HepG2 (cell line): ENCODE measurements at regions of chr7 and their contacts with region 1.

Region 1: DNA sequence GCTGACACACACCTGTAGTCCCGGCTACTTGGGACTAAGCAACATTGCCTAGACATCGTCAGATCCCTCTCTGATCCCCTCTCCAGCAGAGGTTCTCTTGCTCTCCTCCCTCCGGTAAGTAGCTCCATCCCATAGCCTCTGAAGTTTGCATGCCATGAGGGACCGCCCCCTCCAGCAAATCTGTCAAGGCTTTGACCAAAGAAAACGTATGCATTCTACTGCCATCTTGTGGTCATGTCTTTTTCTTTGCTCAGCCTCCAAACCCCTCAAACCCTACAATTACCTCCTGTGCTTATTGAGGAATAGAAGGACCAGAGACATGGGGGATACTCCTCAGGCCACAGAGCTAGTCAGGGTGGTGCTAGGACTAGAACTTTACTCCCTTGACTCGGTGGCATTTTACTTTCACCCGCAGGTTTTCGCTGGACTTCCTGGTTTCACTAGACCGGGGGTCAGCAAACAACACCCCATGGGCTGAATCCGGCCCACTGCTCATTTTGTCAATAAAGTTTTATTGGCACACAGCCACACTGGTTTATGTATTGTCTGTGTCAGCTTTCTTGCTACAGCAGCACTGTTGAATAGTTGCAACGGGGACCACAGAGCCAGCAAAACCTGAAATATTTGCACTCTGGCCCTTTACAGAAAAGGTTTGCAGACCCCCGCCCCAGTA is 202.6 kb upstream of the FOXK1 start:
- DNase-seq: peak; percentile 72
- ATAC-seq: peak; percentile 90
- H3K4me3 ChIP-seq: no peak overlapping the region
- H3K27ac ChIP-seq: no peak overlapping the region
- H3K4me1 ChIP-seq: no peaks in the 10 kb centered on the region
- H3K27me3 ChIP-seq: no peaks in the 10 kb centered on the region
- CTCF ChIP-seq: peak; percentile 77
- EP300 ChIP-seq: no peak
- POLR2A ChIP-seq: no peak
- RAD21 ChIP-seq: 0 out of 2 replicates have a peak, but pooled peaks have one; percentile 32

Region 2: GRCh38 chr7:4226525-4226884 is 253.0 kb before region 1 on chr7:
- CTCF ChIA-PET with region 1: interaction called, 6 read pairs
- POLR2A ChIA-PET with region 1: no interaction called
- in situ Hi-C with region 1: loop called (anchors 10 kb)
- intact Hi-C with region 1: loop called (anchors 10 kb)
- DNase-seq: peak; percentile 8
- ATAC-seq: peak; percentile 66
- H3K4me3 ChIP-seq: no peak overlapping the region
- H3K27ac ChIP-seq: no peak overlapping the region
- H3K4me1 ChIP-seq: no peaks in the 10 kb centered on the region
- H3K27me3 ChIP-seq: no peaks in the 10 kb centered on the region
- CTCF ChIP-seq: peak; percentile 53
- EP300 ChIP-seq: no peak
- POLR2A ChIP-seq: no peak
- RAD21 ChIP-seq: no peak

Region 3: GRCh38 chr7:4235596-4235995 is 243.9 kb before region 1 on chr7:
- CTCF ChIA-PET with region 1: no interaction called
- POLR2A ChIA-PET with region 1: no interaction called
- in situ Hi-C with region 1: no loop called
- intact Hi-C with region 1: loop called (anchors 10 kb)
- DNase-seq: peak; percentile 45
- ATAC-seq: peak; percentile 89
- H3K4me3 ChIP-seq: no peak overlapping the region
- H3K27ac ChIP-seq: no peak overlapping the region
- H3K4me1 ChIP-seq: peaks cover 40% of the 10 kb centered on the region
- H3K27me3 ChIP-seq: no peaks in the 10 kb centered on the region
- CTCF ChIP-seq: no peak
- EP300 ChIP-seq: no peak
- POLR2A ChIP-seq: no peak
- RAD21 ChIP-seq: no peak

Region 4: GRCh38 chr7:4602905-4603842 is 123.7 kb after region 1 on chr7:
- CTCF ChIA-PET with region 1: no interaction called
- POLR2A ChIA-PET with region 1: no interaction called
- in situ Hi-C with region 1: no loop called
- intact Hi-C with region 1: no loop called
- DNase-seq: no peak
- ATAC-seq: no peak
- H3K4me3 ChIP-seq: no peak overlapping the region
- H3K27ac ChIP-seq: no peak overlapping the region
- H3K4me1 ChIP-seq: no peaks in the 10 kb centered on the region
- H3K27me3 ChIP-seq: peaks cover 0 to 12% of the 10 kb centered on the region in 2 experiments; a peak in 2 of 5 replicates
- CTCF ChIP-seq: no peak
- EP300 ChIP-seq: no peak
- POLR2A ChIP-seq: no peak
- RAD21 ChIP-seq: no peak